Endothelial cell of umbilical vein (primary cell): ENCODE measurements at regions of chr12 and their contacts with region 1.

Region 1: DNA sequence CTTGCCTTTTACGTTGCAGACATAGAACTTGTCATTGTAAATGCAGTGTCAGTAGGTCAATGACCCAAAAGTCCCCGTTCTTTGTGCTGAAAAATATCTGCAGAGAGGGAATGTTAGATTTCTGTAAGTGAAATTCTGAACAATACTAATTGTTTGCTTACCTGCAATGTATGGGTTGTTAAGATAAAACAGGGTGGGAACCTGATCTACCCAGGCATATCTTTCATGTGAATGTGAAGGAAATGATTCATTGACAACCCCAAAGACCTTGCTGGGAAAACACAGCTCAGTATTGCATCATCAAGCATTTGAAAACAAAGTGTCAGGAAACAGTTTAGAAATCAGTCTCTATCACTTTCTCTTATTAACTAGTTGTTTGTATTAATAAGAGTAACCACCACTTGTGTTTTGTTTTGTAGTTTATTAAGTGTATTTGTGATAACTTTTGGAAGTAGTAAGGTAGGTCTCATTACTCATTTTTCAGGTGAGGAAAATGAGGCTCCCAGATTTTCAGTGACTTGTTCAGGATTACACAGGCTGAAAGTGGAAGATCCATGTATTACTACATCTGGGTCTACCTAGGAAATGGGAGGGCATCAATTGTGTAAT is 57.9 kb upstream of the SLC38A2 start:
- DNase-seq: peak; percentile 97
- H3K4me3 ChIP-seq: peak overlapping the region in 1 of 3 experiments; percentile 48
- H3K27ac ChIP-seq: peak overlapping the region; percentile 99
- H3K4me1 ChIP-seq: peaks cover 43% of the 10 kb centered on the region
- H3K27me3 ChIP-seq: no peaks in the 10 kb centered on the region
- CTCF ChIP-seq: no peak
- POLR2A ChIP-seq: peak; percentile 72

Region 2: GRCh38 chr12:46219884-46220655 is 210.4 kb before region 1 on chr12:
- CTCF ChIA-PET with region 1: no interaction called
- POLR2A ChIA-PET with region 1: no interaction called
- dilution Hi-C with region 1: no loop called
- intact Hi-C with region 1: loop called (anchors 5 kb)
- DNase-seq: peak; percentile 82
- H3K4me3 ChIP-seq: peak overlapping the region in 1 of 3 experiments; percentile 37
- H3K27ac ChIP-seq: peak overlapping the region; percentile 97
- H3K4me1 ChIP-seq: peaks cover 49% of the 10 kb centered on the region
- H3K27me3 ChIP-seq: no peaks in the 10 kb centered on the region
- CTCF ChIP-seq: no peak
- POLR2A ChIP-seq: no peak

Region 3: DNA sequence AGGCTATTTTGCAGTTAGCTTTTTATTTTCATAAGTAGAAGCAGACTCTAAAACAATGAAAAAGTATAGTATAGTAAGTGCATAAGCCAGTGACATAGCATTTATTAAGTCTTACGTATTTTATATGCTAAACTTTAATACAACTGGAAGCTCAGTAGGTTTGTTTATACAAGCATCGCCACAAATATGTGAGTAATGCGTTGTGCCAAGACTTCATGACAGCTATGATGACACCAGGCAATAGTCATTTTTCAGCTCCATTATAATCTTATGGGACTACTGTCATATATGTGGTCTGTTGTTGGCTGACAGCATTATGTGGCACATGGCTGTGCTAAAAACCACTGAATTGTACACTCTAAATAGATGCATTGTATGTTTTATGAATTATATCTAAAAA is 98.2 kb before region 1 on chr12:
- CTCF ChIA-PET with region 1: no interaction called
- POLR2A ChIA-PET with region 1: no interaction called
- dilution Hi-C with region 1: no loop called
- intact Hi-C with region 1: no loop called
- DNase-seq: no peak
- H3K4me3 ChIP-seq: no peak overlapping the region
- H3K27ac ChIP-seq: no peak overlapping the region
- H3K4me1 ChIP-seq: no peaks in the 10 kb centered on the region
- H3K27me3 ChIP-seq: peaks cover 0 to 7% of the 10 kb centered on the region in 2 experiments
- CTCF ChIP-seq: no peak
- POLR2A ChIP-seq: no peak

Region 4: DNA sequence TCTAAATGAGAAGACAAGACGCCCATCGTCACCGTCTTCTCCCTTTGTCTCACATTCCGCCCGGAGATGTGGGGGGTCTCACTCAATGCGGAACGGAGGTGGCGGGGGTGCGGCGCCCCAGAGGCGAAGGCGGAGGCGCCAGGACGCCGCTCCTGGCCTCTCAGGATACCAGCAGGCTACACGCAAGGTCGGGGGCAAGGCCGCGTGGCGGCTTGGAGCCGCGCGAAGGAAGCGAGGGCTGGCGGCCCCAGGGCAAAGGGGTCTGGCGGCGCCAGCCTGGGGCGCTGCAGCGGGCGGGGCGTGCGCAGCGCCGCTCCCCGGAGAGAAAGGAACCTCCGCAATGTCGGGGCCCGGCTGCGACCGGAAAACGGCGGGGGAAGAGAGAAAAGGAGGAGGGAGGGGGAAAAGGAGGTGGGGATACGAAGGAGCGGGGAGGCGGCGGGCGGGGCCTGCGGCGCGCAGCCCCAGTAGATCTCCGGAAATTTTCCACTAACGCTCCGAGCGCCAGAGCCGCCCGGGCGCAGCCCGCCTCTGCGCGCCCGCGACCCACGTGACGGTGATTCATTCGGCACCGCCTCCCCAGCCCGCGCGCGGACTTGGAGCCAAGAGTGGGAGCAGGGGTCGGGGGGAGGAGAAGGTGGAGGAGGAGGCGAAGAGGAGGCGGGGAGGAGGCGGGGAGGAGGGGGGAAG is 47.3 kb before region 1 on chr12:
- CTCF ChIA-PET with region 1: interaction called, 11 read pairs
- POLR2A ChIA-PET with region 1: interaction called, 3 read pairs
- dilution Hi-C with region 1: no loop called
- intact Hi-C with region 1: loop called (anchors 1 kb)
- DNase-seq: peak; percentile 97
- H3K4me3 ChIP-seq: peak overlapping the region; percentile 39 to 68 (median 44)
- H3K27ac ChIP-seq: peak overlapping the region; percentile 98
- H3K4me1 ChIP-seq: peaks cover 44% of the 10 kb centered on the region
- H3K27me3 ChIP-seq: no peaks in the 10 kb centered on the region
- CTCF ChIP-seq: peak in 1 of 2 donors; percentile 14
- POLR2A ChIP-seq: peak; percentile 76

Region 5: DNA sequence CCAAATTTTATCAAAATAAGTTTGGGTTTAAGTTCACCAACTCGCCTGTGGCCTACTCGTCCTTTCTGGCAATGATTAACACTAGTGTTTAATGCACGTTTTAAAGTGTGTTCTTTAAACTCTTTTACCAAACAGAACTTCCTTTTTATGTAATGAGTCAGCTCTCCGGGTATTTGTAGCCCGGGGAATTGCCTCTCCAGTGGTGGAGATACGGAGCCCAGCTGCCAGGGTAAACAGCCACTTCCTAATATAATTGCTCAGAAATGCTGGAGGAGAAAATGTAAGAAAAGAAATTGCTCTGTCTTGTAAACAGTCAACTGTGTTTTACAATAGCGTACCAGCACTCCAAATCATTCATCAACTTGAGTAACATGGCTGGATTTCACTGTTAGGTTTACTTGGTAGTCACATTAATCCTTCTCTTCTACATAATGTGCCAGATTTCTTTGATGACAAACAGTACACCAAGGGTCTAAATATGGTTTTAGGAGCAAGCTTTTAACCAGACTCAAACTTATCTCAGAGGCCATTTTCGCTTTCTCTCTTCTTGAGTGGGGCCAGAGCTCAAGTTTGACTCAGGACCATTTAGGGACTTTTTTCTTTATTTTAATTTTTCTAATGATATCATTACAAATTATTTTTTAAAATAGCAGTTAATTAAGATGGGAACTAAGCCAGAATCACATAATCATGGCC is 43.3 kb after region 1 on chr12:
- CTCF ChIA-PET with region 1: interaction called, 5 read pairs
- POLR2A ChIA-PET with region 1: interaction called, 8 read pairs
- dilution Hi-C with region 1: no loop called
- intact Hi-C with region 1: loop called (anchors 1 kb)
- DNase-seq: peak; percentile 98
- H3K4me3 ChIP-seq: peak overlapping the region in 1 of 3 experiments; percentile 29
- H3K27ac ChIP-seq: peak overlapping the region; percentile 94
- H3K4me1 ChIP-seq: peaks cover 56% of the 10 kb centered on the region
- H3K27me3 ChIP-seq: no peaks in the 10 kb centered on the region
- CTCF ChIP-seq: no peak
- POLR2A ChIP-seq: peak; percentile 19

Region 6: DNA sequence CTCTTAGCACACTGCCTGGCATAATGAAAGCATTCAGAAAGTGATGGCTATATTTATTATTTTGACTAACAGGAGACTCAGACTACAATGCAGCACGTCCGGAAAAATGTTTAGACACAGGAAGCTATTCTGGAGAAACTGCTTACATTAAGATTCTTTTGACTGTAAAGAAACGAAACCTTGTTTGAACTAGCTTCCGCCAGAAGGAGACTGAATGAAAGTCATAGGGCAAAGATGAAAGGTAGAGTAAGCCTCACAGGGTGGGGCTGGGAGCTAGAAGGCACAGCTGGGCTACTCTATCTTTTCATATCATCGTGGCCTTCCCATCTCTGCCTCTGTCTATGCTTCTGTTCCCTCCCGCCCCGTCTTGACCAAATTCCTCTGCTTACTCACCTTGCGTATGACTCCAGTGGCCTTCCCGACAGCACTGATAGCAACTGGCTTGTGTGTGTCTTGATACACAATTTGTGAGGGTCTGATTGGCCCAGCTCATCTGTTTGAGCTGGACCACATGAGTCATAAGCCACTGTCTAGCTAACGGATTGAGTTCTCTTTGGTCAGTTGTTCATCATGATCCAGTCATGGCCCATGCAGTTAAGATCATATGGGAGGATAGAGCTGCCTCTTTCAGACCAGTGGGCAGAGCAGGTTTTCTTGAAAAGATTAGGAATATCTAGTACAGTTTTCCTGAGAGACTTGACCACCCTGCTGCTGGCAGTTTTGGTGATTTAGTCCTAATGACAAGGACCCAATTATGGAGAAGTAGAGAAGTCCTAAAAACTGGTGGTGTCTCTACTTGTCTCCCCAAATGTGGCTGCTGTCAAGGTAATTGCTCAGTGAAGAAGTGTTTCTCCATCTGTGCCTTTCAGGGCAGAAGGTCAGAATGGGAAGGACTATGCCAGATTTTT is 93.7 kb after region 1 on chr12:
- CTCF ChIA-PET with region 1: interaction called, 4 read pairs
- POLR2A ChIA-PET with region 1: interaction called, 6 read pairs
- dilution Hi-C with region 1: no loop called
- intact Hi-C with region 1: loop called (anchors 1 kb)
- DNase-seq: peak; percentile 83
- H3K4me3 ChIP-seq: peak overlapping the region in 1 of 3 experiments; percentile 34
- H3K27ac ChIP-seq: peak overlapping the region; percentile 81
- H3K4me1 ChIP-seq: peaks cover 33% of the 10 kb centered on the region
- H3K27me3 ChIP-seq: no peaks in the 10 kb centered on the region
- CTCF ChIP-seq: no peak
- POLR2A ChIP-seq: no peak